AG04450 (cell line): ENCODE measurements at regions of chr1 and their contacts with region 1.

Region 1: DNA sequence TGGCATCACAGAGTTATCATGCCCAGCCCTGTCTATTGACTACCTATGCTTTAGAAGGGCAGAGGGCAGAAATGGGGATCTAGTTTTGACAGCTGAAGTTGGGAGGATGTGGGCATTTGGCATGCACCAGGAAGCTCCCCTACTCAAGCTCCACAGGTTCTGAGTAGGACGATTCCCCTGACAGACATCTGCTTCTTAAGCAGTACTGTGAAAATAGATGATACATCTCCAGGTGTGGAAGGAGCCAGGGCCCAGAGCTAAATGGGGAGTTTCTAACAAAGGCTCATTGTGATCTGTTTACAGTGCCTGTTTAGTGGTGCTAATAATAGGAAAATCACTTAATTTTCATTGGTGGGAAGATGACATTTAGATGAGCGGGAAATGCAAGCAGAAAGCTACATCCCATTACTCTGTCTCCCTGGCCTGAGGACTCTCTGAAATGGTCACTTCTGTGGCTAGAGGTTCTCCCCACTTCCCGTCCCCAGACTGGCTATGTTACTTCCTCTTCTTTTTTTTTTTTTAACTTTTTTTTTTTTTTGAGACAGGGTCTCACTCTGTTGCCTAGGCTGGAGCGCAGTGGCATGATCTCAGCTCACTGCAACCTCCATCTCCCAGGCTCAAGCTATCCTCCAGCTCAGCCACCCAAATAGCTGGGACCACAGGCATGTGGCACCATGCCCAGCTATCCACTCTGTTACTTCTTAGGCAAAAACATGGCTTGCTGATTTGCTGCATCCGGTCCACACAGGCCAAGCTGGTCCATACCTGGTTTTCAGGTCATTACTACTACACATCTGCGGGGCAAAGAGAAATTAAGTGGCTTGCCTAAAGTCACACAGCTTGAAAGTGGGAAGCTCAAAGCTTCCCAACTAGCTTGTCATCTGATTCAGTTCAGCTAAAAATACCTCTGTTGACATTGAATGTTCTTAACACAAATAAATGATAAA is 23.2 kb upstream of the CNIH3 start:
- DNase-seq: peak; percentile 63
- H3K4me3 ChIP-seq: no peak overlapping the region
- H3K27ac ChIP-seq: no peak overlapping the region
- H3K27me3 ChIP-seq: no peaks in the 10 kb centered on the region
- CTCF ChIP-seq: no peak

Region 2: GRCh38 chr1:224582041-224582440 is 10.9 kb before region 1 on chr1:
- CTCF ChIA-PET with region 1: no interaction called
- POLR2A ChIA-PET with region 1: interaction called, 10 read pairs
- DNase-seq: peak; percentile 64
- H3K4me3 ChIP-seq: no peak overlapping the region
- H3K27ac ChIP-seq: no peak overlapping the region
- H3K27me3 ChIP-seq: no peaks in the 10 kb centered on the region
- CTCF ChIP-seq: no peak